Right ventricle myocardium superior (tissue), 1 donor: ENCODE measurements at regions of chr10 and their contacts with region 1.

Region 1: GRCh38 chr10:103416436-103417147 is 20.2 kb downstream of the PDCD11 start:
- DNase-seq: no peak
- ATAC-seq: peak; percentile 65

Region 2: GRCh38 chr10:103278862-103279298 is 137.7 kb before region 1 on chr10:
- intact Hi-C with region 1: no loop called
- DNase-seq: peak; percentile 54
- ATAC-seq: no peak

Region 3: DNA sequence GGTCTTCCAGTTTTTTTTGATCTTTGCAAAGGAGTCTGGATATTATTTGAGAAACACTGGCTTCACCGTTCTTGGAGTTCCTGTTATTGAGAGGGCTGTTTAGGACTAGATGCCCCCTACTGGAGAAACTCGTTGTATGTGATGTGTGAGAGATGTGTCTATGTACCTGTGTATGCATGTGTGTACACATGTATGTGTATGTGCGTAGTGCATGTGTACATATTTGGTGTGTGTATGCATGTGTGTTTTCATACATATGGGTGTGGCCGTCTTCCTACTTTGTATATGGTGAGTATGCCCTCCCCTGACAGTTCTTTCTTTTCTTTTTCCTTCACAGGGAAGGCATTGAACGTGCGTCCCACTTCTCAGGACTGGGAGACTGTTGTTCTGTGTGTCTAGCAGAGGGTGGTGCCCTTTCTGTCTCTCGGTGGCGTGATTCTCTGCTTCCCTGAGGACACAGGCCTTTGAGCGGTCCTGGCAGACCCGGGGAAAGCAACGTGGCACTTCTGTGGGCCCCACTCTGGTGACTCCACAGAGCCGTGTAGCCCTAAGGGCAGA is 65.5 kb after region 1 on chr10:
- intact Hi-C with region 1: loop called (anchors 2 kb)
- DNase-seq: no peak
- ATAC-seq: peak; percentile 69